CD4-positive, alpha-beta memory T cell (primary cell): ENCODE measurements at regions of chr11 and their contacts with region 1.

Region 1: GRCh38 chr11:61041755-61042518 is 60.4 kb upstream of the CD5 start:
- DNase-seq: peak; percentile 89 to 95 (median 93)
- H3K4me3 ChIP-seq: peak overlapping the region in 1 of 2 donors; percentile 54
- H3K4me3 Mint-ChIP-seq: peak overlapping the region; percentile 83 to 94 (median 87)
- H3K27ac ChIP-seq: peak overlapping the region; percentile 85
- H3K27ac Mint-ChIP-seq: peak overlapping the region; percentile 95 to 100 (median 99)
- H3K4me1 ChIP-seq: peaks cover 61% of the 10 kb centered on the region
- H3K4me1 Mint-ChIP-seq: peaks cover 35 to 66% (median 44%) of the 10 kb centered on the region in 4 donors
- H3K27me3 ChIP-seq: no peaks in the 10 kb centered on the region
- H3K27me3 Mint-ChIP-seq: no peaks in the 10 kb centered on the region

Region 2: DNA sequence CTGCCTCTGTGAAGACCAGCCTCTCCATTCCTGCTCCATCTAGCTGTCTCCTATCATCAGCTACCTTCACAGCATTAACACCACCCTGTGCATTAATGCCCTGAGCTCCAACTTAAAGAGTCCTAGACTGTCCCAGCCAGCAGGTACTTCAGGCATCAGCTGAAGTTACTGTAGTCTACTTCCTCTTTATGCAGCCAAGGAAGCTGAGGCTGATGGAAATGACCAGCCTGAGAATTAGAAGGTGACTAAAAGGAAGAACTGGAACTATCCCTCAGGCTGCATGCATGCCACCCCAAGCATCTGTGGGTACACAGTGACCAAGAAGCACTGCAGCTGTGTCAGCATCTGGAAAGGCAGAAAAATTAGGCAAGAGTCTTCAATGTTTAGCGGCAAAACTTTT is 228.6 kb before region 1 on chr11:
- CTCF ChIA-PET with region 1: no interaction called
- POLR2A ChIA-PET with region 1: no interaction called
- intact Hi-C with region 1: no loop called
- DNase-seq: no peak
- H3K4me3 ChIP-seq: no peak overlapping the region
- H3K4me3 Mint-ChIP-seq: no peak overlapping the region
- H3K27ac ChIP-seq: no peak overlapping the region
- H3K27ac Mint-ChIP-seq: no peak overlapping the region
- H3K4me1 ChIP-seq: no peaks in the 10 kb centered on the region
- H3K4me1 Mint-ChIP-seq: no peaks in the 10 kb centered on the region
- H3K27me3 ChIP-seq: no peaks in the 10 kb centered on the region
- H3K27me3 Mint-ChIP-seq: peaks cover 6 to 10% of the 10 kb centered on the region in 2 donors

Region 3: GRCh38 chr11:60985991-60986915 is 55.7 kb before region 1 on chr11:
- CTCF ChIA-PET with region 1: interaction called, 4 read pairs
- POLR2A ChIA-PET with region 1: interaction called, 116 read pairs
- intact Hi-C with region 1: loop called (anchors 1 kb)
- DNase-seq: peak; percentile 92 to 99 (median 97)
- H3K4me3 ChIP-seq: peak overlapping the region in 1 of 2 donors; percentile 39
- H3K4me3 Mint-ChIP-seq: peak overlapping the region; percentile 61 to 87 (median 78)
- H3K27ac ChIP-seq: peak overlapping the region; percentile 92
- H3K27ac Mint-ChIP-seq: peak overlapping the region; percentile 88 to 100 (median 97)
- H3K4me1 ChIP-seq: peaks cover 94% of the 10 kb centered on the region
- H3K4me1 Mint-ChIP-seq: peaks cover 69 to 96% (median 86%) of the 10 kb centered on the region in 4 donors
- H3K27me3 ChIP-seq: no peaks in the 10 kb centered on the region
- H3K27me3 Mint-ChIP-seq: no peaks in the 10 kb centered on the region

Region 4: GRCh38 chr11:61021661-61022212 is 20.2 kb before region 1 on chr11:
- CTCF ChIA-PET with region 1: interaction called, 28 read pairs
- POLR2A ChIA-PET with region 1: interaction called, 427 read pairs
- intact Hi-C with region 1: loop called (anchors 1 kb)
- DNase-seq: peak; percentile 92 to 99 (median 94)
- H3K4me3 ChIP-seq: peak overlapping the region; percentile 40 to 41
- H3K4me3 Mint-ChIP-seq: peak overlapping the region; percentile 60 to 81 (median 72)
- H3K27ac ChIP-seq: peak overlapping the region; percentile 83
- H3K27ac Mint-ChIP-seq: peak overlapping the region; percentile 97 to 100 (median 99)
- H3K4me1 ChIP-seq: peaks cover 76% of the 10 kb centered on the region
- H3K4me1 Mint-ChIP-seq: peaks cover 60 to 85% (median 71%) of the 10 kb centered on the region in 4 donors
- H3K27me3 ChIP-seq: no peaks in the 10 kb centered on the region
- H3K27me3 Mint-ChIP-seq: no peaks in the 10 kb centered on the region

Region 5: GRCh38 chr11:61071208-61071681 is 29.3 kb after region 1 on chr11:
- CTCF ChIA-PET with region 1: interaction called, 18 read pairs
- POLR2A ChIA-PET with region 1: interaction called, 1,022 read pairs
- intact Hi-C with region 1: loop called (anchors 1 kb)
- DNase-seq: peak; percentile 61 to 77 (median 72)
- H3K4me3 ChIP-seq: peak overlapping the region in 1 of 2 donors; percentile 21
- H3K4me3 Mint-ChIP-seq: peak overlapping the region; percentile 60 to 89 (median 79)
- H3K27ac ChIP-seq: peak overlapping the region; percentile 63
- H3K27ac Mint-ChIP-seq: peak overlapping the region; percentile 92 to 98 (median 96)
- H3K4me1 ChIP-seq: peaks cover 98% of the 10 kb centered on the region
- H3K4me1 Mint-ChIP-seq: peaks cover 50 to 92% (median 74%) of the 10 kb centered on the region in 4 donors
- H3K27me3 ChIP-seq: no peaks in the 10 kb centered on the region
- H3K27me3 Mint-ChIP-seq: no peaks in the 10 kb centered on the region

Region 6: GRCh38 chr11:61102667-61103571 is 61.0 kb after region 1 on chr11:
- CTCF ChIA-PET with region 1: interaction called, 5 read pairs
- POLR2A ChIA-PET with region 1: interaction called, 55 read pairs
- intact Hi-C with region 1: loop called (anchors 2 kb)
- DNase-seq: peak; percentile 34 to 63 (median 47)
- H3K4me3 ChIP-seq: peak overlapping the region; percentile 99 to 100
- H3K4me3 Mint-ChIP-seq: no peak overlapping the region
- H3K27ac ChIP-seq: peak overlapping the region; percentile 100
- H3K27ac Mint-ChIP-seq: no peak overlapping the region
- H3K4me1 ChIP-seq: peaks cover 64% of the 10 kb centered on the region
- H3K4me1 Mint-ChIP-seq: peaks cover 0 to 47% (median 28%) of the 10 kb centered on the region in 4 donors
- H3K27me3 ChIP-seq: no peaks in the 10 kb centered on the region
- H3K27me3 Mint-ChIP-seq: no peaks in the 10 kb centered on the region

Region 7: DNA sequence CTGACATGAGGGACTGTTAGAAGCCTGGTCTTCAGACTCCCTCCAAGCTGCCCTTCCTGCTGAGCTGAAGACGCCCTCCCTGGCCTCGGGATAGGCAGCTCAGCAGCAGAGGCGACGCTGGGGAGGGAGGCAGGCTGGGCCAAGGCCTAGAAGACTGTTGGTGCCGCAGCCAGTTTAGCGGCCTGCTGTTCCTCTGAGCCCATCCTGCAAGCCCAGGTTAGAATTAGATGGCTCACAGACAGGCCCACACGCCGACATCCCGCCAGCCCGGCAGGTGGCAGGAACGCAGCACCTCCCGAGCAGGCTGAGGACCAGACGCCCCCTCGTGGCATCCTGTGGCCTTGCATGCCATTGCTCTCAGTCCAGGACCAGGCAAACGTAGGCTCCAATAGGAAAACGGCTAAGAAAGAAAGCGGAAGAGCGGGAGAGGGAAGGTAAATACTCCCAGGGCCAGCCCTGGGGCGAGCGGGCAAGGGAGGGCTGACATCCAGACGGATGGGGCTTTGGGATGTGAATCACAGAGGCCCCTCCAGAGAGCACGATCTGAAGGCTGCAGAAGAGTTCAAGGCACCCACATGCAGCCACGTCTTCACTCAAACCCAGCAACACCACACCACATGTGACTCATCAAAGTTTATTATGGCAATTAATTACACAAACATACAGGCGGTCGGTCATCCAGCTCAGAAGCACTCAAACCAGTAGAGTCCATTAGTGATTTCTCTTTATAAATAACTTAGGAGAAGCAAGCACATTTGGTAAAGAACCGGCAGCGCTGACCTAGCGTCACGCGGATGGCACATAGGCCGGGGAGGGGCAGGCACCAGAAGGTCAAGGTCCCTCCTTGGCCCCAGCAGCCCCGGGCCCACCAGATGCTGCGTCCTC is 87.9 kb after region 1 on chr11:
- CTCF ChIA-PET with region 1: interaction called, 4 read pairs
- POLR2A ChIA-PET with region 1: interaction called, 21 read pairs
- intact Hi-C with region 1: no loop called
- DNase-seq: peak; percentile 87 to 91 (median 89)
- H3K4me3 ChIP-seq: peak overlapping the region in 1 of 2 donors; percentile 10
- H3K4me3 Mint-ChIP-seq: peak overlapping the region in 7 of 8 donors; percentile 3 to 66 (median 53)
- H3K27ac ChIP-seq: peak overlapping the region; percentile 19
- H3K27ac Mint-ChIP-seq: peak overlapping the region; percentile 14 to 87 (median 53)
- H3K4me1 ChIP-seq: peaks cover 18% of the 10 kb centered on the region
- H3K4me1 Mint-ChIP-seq: peaks cover 11 to 37% (median 16%) of the 10 kb centered on the region in 4 donors
- H3K27me3 ChIP-seq: no peaks in the 10 kb centered on the region
- H3K27me3 Mint-ChIP-seq: no peaks in the 10 kb centered on the region